ENCODE measurements at regions of chr17 and their contacts with region 1.

Region 1: GRCh38 chr17:17141860-17142552 is 64.1 kb downstream of the PLD6 start:
- DNase-seq: peak; percentile 48
- H3K4me3 ChIP-seq: no peak overlapping the region
- H3K27ac ChIP-seq: no peak overlapping the region
- H3K4me1 ChIP-seq: peaks cover 18% of the 10 kb centered on the region
- CTCF ChIP-seq: peak; percentile 97

Region 2: DNA sequence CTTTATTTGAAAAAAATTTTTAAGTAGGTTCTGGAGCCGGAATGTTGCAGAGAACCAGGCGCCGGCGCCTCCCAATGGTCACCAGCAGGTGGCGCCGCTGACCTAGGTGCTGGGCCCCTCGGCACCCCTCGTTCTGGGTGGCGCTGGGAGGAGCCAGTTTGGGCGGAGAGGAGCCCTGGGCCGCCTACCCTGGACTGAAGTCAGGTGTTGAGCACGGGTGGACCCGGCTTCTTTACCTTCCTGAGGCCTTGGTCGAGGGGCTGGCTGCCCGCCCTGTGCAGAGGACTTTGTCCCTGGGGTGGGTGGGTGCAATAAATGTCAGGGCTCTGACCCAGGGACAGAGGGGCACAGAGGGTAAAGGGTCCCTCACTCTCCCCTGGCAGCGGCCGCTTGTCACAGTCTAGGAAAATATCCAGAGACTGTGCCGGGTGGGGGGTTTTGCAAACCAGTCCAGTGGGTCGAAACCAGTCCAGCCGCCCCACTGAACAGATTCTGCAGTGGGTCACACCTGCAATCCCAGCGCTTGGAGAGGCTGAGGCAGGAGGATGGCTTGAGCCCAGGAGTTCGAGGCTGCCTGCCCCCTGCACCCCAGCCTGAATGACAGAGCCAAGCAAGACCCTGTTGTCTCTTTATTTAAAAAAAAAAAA is 140.0 kb before region 1 on chr17:
- CTCF ChIA-PET with region 1: no interaction called
- POLR2A ChIA-PET with region 1: no interaction called
- intact Hi-C with region 1: loop called (anchors 2 kb)
- DNase-seq: peak; percentile 72
- H3K4me3 ChIP-seq: no peak overlapping the region
- H3K27ac ChIP-seq: no peak overlapping the region
- H3K4me1 ChIP-seq: peaks cover 7% of the 10 kb centered on the region
- CTCF ChIP-seq: peak; percentile 98